Upper lobe of right lung (tissue), 1 donor: ENCODE measurements at regions of chr17 and their contacts with region 1.

Region 1: DNA sequence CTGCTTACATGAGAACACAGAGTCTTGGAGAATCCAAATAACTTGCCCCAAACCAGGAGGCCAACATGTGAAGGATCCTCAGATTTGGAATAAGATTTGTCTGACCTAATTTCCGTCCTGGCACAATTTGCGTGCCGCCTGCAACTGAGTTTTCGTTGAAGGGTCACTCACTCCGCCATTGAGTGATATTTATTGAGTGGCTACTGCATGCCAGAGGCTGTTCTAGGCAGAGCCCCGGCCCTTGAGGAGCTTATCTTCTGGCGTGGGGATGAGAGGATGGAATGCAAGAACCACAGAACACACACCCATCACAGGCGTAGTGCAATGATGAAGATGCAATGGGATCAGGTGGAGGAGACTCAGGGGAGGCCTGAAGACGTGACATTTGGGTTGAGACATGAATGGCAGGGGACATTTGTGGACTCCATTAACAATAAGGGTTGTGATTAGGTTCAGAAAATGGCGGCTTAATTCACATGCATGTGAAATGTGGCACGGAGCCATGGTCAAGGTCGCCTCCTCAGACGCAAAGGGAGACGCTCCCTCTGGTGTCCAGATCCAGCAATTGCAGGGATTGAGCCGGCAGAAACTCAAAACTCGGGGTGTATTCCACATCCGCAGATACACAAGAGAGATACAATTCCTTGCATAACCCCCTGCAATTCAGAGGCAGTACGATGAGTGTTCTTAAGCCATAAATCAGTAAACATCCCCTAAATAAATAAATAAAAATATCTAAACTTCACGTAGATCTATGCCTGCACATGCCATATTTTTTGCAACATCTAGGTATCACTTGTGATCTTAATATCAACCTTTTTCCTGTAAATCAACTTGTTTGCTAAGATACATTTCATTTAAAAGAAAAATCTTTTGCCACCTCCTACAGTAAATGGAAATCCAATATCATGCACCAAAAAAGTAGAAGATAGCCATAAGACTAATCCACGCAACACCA is 57.9 kb upstream of the CACNG4 start:
- DNase-seq: peak; percentile 84
- ATAC-seq: peak; percentile 78
- H3K4me3 ChIP-seq: no peak overlapping the region
- H3K27ac ChIP-seq: no peak overlapping the region
- H3K4me1 ChIP-seq: peaks cover 17% of the 10 kb centered on the region
- H3K27me3 ChIP-seq: no peaks in the 10 kb centered on the region
- CTCF ChIP-seq: peak; percentile 89

Region 2: DNA sequence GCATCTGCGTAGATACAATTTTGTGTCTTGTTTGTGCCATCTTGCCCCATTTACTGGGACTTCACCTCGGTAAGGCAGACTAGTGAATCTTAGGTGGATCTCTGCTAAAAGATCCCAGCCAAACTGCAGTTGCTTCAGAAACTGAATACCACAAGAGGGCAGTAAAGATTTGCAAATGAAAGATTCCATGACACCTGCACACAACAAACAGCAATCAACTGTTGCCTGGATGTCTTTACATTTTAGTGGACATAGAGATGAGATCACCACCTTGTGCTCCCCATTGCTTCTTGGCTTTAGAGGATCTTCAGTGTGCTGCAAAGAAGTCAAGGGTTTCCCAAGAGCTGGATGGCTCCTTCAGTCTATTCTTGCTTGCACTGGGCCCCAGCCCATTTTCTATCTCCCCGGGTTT is 190.8 kb before region 1 on chr17:
- intact Hi-C with region 1: loop called (anchors 10 kb)
- DNase-seq: no peak
- ATAC-seq: peak; percentile 58
- H3K4me3 ChIP-seq: no peak overlapping the region
- H3K27ac ChIP-seq: no peak overlapping the region
- H3K4me1 ChIP-seq: peaks cover 8% of the 10 kb centered on the region
- H3K27me3 ChIP-seq: no peaks in the 10 kb centered on the region
- CTCF ChIP-seq: peak; percentile 63

Region 3: DNA sequence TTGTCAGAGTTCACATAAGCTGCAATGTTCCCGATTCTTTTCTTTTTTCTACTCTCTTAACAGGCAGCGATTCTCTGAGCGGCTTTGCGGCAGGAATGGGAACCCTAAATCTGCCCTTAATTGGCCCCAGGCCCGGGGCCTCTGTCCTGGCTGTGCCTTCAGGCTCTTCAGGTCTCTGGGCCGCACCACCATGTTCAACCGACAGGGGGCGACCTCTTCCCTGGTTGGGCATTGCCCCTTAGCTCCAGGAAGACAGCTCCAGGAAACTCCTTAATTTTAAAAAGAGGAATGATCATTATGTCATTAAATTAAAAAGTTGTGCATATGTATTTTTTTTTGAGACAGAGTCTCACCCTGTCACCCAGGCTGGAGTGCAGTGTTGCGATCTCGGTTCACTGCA is 51.4 kb before region 1 on chr17:
- intact Hi-C with region 1: no loop called
- DNase-seq: no peak
- ATAC-seq: no peak
- H3K4me3 ChIP-seq: no peak overlapping the region
- H3K27ac ChIP-seq: no peak overlapping the region
- H3K4me1 ChIP-seq: no peaks in the 10 kb centered on the region
- H3K27me3 ChIP-seq: no peaks in the 10 kb centered on the region
- CTCF ChIP-seq: peak; percentile 23

Region 4: GRCh38 chr17:66951935-66952662 is 45.5 kb after region 1 on chr17:
- intact Hi-C with region 1: no loop called
- DNase-seq: peak; percentile 77
- ATAC-seq: peak; percentile 90
- H3K4me3 ChIP-seq: no peak overlapping the region
- H3K27ac ChIP-seq: peak overlapping the region; percentile 70
- H3K4me1 ChIP-seq: no peaks in the 10 kb centered on the region
- H3K27me3 ChIP-seq: peaks cover 4% of the 10 kb centered on the region
- CTCF ChIP-seq: no peak